ENCODE measurements at regions of chr17 and their contacts with region 1.

Region 1: GRCh38 chr17:78970834-78971773 is 8.6 kb downstream of the LGALS3BP start:
- DNase-seq: peak; percentile 86
- H3K4me3 Mint-ChIP-seq: no peak overlapping the region
- H3K27ac Mint-ChIP-seq: peak overlapping the region; percentile 85
- H3K4me1 Mint-ChIP-seq: peaks cover 7% of the 10 kb centered on the region
- H3K27me3 Mint-ChIP-seq: no peaks in the 10 kb centered on the region

Region 2: GRCh38 chr17:78865682-78866390 is 105.3 kb before region 1 on chr17:
- CTCF ChIA-PET with region 1: interaction called, 51 read pairs
- DNase-seq: peak; percentile 75
- H3K4me3 Mint-ChIP-seq: no peak overlapping the region
- H3K27ac Mint-ChIP-seq: no peak overlapping the region
- H3K4me1 Mint-ChIP-seq: peaks cover 4% of the 10 kb centered on the region
- H3K27me3 Mint-ChIP-seq: peaks cover 27% of the 10 kb centered on the region

Measured in activated naive CD4-positive, alpha-beta T cell treated with anti-CD3 and anti-CD28 coated beads, Interleukin-2, amount 10 ng/mL, durations not matched to agents 7 days and 5 days (primary cell).